ENCODE measurements at regions of chr2 and their contacts with region 1.

Region 1: DNA sequence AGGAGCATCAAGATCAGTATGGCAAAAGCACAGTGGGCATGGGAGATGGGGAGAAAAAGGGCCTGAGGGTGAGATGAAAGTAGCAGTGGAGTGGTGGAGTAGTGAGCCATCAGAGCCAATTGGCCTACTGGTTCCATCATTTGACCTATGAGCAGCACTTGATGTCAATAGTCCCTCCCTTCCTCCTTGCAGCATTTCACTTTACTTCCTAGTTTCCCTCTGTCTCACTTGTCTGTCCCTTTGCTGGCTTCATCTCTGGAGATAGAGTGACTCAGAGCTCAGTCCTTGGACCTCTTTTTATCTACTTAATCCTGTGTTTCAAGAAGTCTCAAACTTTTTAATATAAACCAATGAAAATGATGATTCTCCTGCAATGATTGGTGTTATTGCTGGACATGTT is 32.1 kb downstream of the FBXO48 start:
- DNase-seq: no peak
- H3K4me3 ChIP-seq: no peak overlapping the region
- H3K27ac ChIP-seq: peak overlapping the region in 1 of 2 donors; percentile 81
- H3K4me1 ChIP-seq: peaks cover 4% of the 10 kb centered on the region
- H3K27me3 ChIP-seq: no peaks in the 10 kb centered on the region
- CTCF ChIP-seq: no peak
- EP300 ChIP-seq: no peak
- POLR2A ChIP-seq: no peak

Region 2: GRCh38 chr2:68121873-68122679 is 312.9 kb before region 1 on chr2:
- intact Hi-C with region 1: loop called in 3 of 4 experiments (anchors 5 to 10 kb)
- DNase-seq: peak; percentile 83 to 92 (median 92)
- H3K4me3 ChIP-seq: no peak overlapping the region
- H3K27ac ChIP-seq: no peak overlapping the region
- H3K4me1 ChIP-seq: peaks cover 3% of the 10 kb centered on the region
- H3K27me3 ChIP-seq: no peaks in the 10 kb centered on the region
- CTCF ChIP-seq: peak; percentile 74 to 91 (median 88)
- EP300 ChIP-seq: no peak
- POLR2A ChIP-seq: no peak

Region 3: DNA sequence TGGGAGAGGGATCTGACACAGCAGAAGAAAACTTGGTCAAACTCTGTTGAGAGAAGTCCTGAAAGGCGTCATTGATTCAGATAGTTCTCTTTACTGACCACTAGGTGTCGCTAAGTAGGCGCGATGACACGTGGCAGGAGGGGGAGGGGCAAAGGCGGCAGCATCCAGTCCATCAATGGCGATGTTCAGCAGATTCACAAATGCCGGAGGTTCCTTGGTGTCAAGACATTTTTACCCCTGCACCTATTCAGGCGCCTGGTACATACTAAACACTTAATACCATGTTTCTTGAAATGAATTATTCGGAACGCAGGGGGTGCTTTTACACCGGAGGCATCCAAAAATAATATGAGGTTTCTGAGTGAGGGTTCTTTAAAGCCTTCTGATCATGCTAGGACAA is 72.9 kb before region 1 on chr2:
- intact Hi-C with region 1: loop called in 3 of 4 experiments (anchors 5 to 10 kb)
- DNase-seq: peak; percentile 46 to 79 (median 68)
- H3K4me3 ChIP-seq: no peak overlapping the region
- H3K27ac ChIP-seq: no peak overlapping the region
- H3K4me1 ChIP-seq: no peaks in the 10 kb centered on the region
- H3K27me3 ChIP-seq: no peaks in the 10 kb centered on the region
- CTCF ChIP-seq: peak in 2 of 3 donors; percentile 42 to 45
- EP300 ChIP-seq: no peak
- POLR2A ChIP-seq: no peak